A673 (cell line): ENCODE measurements at regions of chr15 and their contacts with region 1.

Region 1: DNA sequence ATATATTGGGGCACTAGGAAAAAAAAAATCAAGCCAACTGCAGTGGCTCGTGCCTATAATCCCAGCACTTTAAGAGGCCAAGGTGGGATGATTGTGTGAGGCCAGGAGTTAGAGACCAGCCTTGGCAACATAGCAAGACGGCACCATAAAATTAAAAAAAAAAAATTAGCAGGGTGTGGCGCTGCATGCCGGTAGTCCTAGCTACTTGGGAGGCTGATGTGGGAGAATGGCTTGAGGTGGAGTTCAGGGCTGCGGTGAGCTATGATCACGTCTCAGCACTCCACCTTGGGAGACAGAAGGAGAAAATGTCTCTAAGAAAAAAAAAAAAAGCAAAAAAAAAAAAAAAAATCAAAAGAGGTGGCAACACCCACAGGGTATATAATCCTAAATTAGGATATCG is 49.6 kb downstream of the INO80 start:
- DNase-seq: no peak
- H3K4me3 ChIP-seq: no peak overlapping the region
- H3K27ac ChIP-seq: no peak overlapping the region
- H3K4me1 ChIP-seq: no peaks in the 10 kb centered on the region
- H3K27me3 ChIP-seq: no peaks in the 10 kb centered on the region
- CTCF ChIP-seq: no peak

Region 2: GRCh38 chr15:40069178-40070165 is 997.0 kb before region 1 on chr15:
- CTCF ChIA-PET with region 1: interaction called, 22 read pairs
- POLR2A ChIA-PET with region 1: no interaction called
- intact Hi-C with region 1: no loop called
- DNase-seq: peak; percentile 87
- H3K4me3 ChIP-seq: no peak overlapping the region
- H3K27ac ChIP-seq: peak overlapping the region; percentile 71
- H3K4me1 ChIP-seq: peaks cover 20% of the 10 kb centered on the region
- H3K27me3 ChIP-seq: no peaks in the 10 kb centered on the region
- CTCF ChIP-seq: no peak

Region 3: GRCh38 chr15:40660686-40661085 is 405.8 kb before region 1 on chr15:
- CTCF ChIA-PET with region 1: no interaction called
- POLR2A ChIA-PET with region 1: no interaction called
- intact Hi-C with region 1: no loop called
- DNase-seq: no peak
- H3K4me3 ChIP-seq: no peak overlapping the region
- H3K27ac ChIP-seq: no peak overlapping the region
- H3K4me1 ChIP-seq: no peaks in the 10 kb centered on the region
- H3K27me3 ChIP-seq: no peaks in the 10 kb centered on the region
- CTCF ChIP-seq: no peak